ENCODE measurements at regions of chr5 and their contacts with region 1.

Region 1: DNA sequence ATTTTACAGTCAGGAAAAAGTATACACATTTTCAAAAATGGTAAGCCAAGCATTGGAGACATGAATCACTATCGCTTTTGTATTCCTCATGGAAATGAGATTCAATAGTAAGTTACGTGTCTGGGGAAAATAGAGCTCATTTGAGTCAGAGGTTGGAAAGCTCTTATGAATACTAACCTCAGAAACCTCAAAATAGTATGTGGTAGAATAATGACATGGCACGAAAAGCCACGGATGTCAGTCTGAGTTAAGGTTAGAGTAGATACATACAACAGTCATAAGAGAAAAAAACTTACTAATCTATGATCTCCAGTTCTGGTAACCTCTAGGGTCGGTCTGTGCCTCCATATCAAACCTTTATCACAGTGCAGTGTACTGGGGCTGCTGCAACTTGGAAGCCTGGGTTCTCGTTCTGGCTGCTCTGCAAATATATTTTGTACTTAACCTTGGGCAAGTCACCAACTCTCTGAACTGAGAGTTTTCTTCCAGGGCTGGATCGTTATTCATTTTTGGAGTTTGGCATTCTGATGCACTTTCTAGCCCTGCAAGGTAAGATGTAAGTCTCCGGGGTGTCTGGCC is 31.8 kb downstream of the MAP1B start:
- DNase-seq: no peak
- H3K4me3 ChIP-seq: no peak overlapping the region
- H3K27ac ChIP-seq: peak overlapping the region in 2 of 4 donors; percentile 3 to 36
- H3K4me1 ChIP-seq: peaks cover 0 to 8% (median 2%) of the 10 kb centered on the region in 4 donors
- H3K27me3 ChIP-seq: no peaks in the 10 kb centered on the region
- CTCF ChIP-seq: no peak
- EP300 ChIP-seq: no peak
- POLR2A ChIP-seq: no peak

Region 2: GRCh38 chr5:71905834-71906711 is 233.0 kb before region 1 on chr5:
- in situ Hi-C with region 1: no loop called
- intact Hi-C with region 1: no loop called
- DNase-seq: no peak
- H3K4me3 ChIP-seq: no peak overlapping the region
- H3K27ac ChIP-seq: peak overlapping the region in 2 of 4 donors; percentile 5 to 36
- H3K4me1 ChIP-seq: peaks cover 0 to 16% (median 10%) of the 10 kb centered on the region in 4 donors
- H3K27me3 ChIP-seq: no peaks in the 10 kb centered on the region
- CTCF ChIP-seq: no peak
- EP300 ChIP-seq: no peak
- POLR2A ChIP-seq: no peak

Region 3: DNA sequence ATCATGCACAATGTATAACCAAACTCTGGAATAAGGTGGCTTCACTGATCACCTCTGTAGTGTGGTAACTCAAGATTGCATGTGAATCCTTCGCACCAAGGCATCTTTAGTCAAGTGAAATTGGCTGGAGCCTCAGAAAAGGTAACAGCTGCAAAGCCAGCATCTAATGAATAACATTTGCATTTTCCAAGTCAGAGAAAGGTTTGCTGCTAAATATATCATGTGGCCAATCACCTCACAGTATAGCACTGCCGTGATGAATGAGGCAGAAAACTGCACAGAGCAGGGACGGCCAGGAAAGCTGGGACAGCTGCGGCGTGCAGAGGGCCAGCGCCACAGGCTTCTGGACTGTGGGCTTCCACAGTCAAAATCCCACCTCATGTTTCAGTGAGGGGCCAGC is 162.5 kb after region 1 on chr5:
- in situ Hi-C with region 1: loop called in 2 of 4 experiments (anchors 10 kb)
- intact Hi-C with region 1: loop called (anchors 5 kb)
- DNase-seq: no peak
- H3K4me3 ChIP-seq: no peak overlapping the region
- H3K27ac ChIP-seq: no peak overlapping the region
- H3K4me1 ChIP-seq: peaks cover 0 to 8% (median 0%) of the 10 kb centered on the region in 4 donors
- H3K27me3 ChIP-seq: no peaks in the 10 kb centered on the region
- CTCF ChIP-seq: no peak
- EP300 ChIP-seq: no peak
- POLR2A ChIP-seq: no peak

Region 4: DNA sequence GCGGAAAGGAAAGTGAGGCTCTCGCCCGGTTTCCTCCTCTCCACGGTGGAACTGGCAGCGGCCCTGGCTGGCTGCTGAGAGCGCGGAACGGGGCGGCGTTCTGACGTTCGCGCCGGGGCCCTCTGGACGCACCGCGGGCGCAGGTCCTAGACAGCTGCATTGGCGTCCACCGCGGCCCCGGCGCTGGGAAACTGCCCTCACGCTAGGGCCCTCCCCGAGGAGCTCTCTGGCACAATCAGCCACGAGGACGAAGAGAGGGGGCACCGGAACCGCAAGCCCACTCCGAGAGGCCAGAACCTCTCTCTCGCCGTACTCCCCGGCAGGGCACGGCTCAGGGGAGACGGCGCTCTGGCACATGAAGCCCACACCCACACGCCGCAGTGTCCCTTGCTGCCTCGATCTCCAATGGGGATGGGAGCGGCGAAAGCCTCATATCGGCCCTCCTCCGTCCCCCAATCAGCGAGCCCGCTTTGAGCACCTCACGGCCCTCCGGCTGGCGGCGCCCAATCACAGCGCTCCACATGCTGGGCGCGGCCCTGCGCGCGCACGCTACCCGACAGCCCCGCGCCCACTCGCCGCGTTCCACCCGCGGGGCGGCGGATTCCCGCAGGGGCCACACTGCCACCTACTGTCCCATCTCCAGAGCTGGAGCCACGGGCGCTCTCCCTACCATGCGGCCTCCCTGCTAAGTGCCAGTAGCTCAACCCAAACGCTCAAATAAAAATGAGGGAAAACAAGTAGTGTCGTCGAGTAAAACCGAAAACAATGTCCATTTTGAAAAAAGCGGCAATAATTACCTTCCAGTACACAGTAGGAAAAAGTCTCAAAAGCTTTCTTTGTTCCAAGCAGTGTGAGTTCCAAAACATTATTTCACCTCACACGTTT is 169.2 kb after region 1 on chr5:
- in situ Hi-C with region 1: loop called in 3 of 4 experiments (anchors 10 kb)
- intact Hi-C with region 1: loop called (anchors 5 kb)
- DNase-seq: peak; percentile 98
- H3K4me3 ChIP-seq: peak overlapping the region; percentile 65 to 93 (median 68)
- H3K27ac ChIP-seq: peak overlapping the region; percentile 96 to 98 (median 98)
- H3K4me1 ChIP-seq: peaks cover 0 to 21% (median 6%) of the 10 kb centered on the region in 4 donors
- H3K27me3 ChIP-seq: no peaks in the 10 kb centered on the region
- CTCF ChIP-seq: peak; percentile 74 to 94 (median 83)
- EP300 ChIP-seq: no peak
- POLR2A ChIP-seq: peak; percentile 96

Region 5: GRCh38 chr5:72319976-72320752 is 181.1 kb after region 1 on chr5 and contains the starts of genes MRPS27 and PTCD2:
- in situ Hi-C with region 1: loop called in 1 of 4 experiments (anchors 10 kb)
- intact Hi-C with region 1: no loop called
- DNase-seq: peak; percentile 97
- H3K4me3 ChIP-seq: peak within 1 kb of the TSS; percentile 57 to 83 (median 65)
- H3K27ac ChIP-seq: peak within 1 kb of the TSS; percentile 77 to 90 (median 82)
- H3K4me1 ChIP-seq: peaks cover 0 to 26% (median 11%) of the 10 kb centered on the region in 4 donors
- H3K27me3 ChIP-seq: no peaks in the 10 kb centered on the region
- CTCF ChIP-seq: peak in 1 of 5 experiments; percentile 21
- EP300 ChIP-seq: no peak
- POLR2A ChIP-seq: peak; percentile 55
- total RNA-seq, gene MRPS27: 14.3 to 34.7 (median 27.9) TPM
- total RNA-seq, gene PTCD2: 1.5 to 9.5 (median 2.9) TPM

Region 6: DNA sequence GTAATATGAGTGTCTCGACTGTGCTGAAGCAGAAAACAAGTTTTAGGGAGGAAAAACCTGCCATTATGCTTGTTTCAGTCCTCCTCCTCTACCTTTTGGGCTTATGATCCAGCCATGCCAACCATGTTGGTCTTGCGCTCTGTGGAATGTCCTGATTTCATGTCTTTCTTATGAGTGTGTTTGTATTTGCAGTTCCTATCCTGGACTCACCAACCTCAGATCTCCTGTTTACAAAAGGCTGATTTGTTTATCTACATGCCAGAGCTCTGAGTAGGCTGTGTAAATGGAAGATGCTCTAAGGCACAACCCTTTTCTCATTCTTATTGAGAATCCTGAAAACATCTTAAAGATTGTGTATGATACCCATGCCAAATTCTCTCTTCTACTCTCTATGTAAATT is 1625.6 kb after region 1 on chr5:
- in situ Hi-C with region 1: no loop called
- intact Hi-C with region 1: no loop called
- DNase-seq: no peak
- H3K4me3 ChIP-seq: no peak overlapping the region
- H3K27ac ChIP-seq: no peak overlapping the region
- H3K4me1 ChIP-seq: peaks cover 0 to 3% (median 0%) of the 10 kb centered on the region in 4 donors
- H3K27me3 ChIP-seq: no peaks in the 10 kb centered on the region
- CTCF ChIP-seq: no peak
- EP300 ChIP-seq: no peak
- POLR2A ChIP-seq: no peak